Heart left ventricle (tissue), 16 donors: ENCODE measurements at regions of chr2 and their contacts with region 1.

Region 1: GRCh38 chr2:10035053-10035422 is 8.3 kb upstream of the KLF11 start:
- DNase-seq: peak in 2 of 5 donors; percentile 15 to 61
- ATAC-seq: no peak
- H3K4me3 ChIP-seq: no peak overlapping the region
- H3K27ac ChIP-seq: peak overlapping the region in 5 of 12 donors; percentile 82 to 97 (median 90)
- H3K4me1 ChIP-seq: peaks cover 7 to 71% (median 50%) of the 10 kb centered on the region in 12 donors
- H3K27me3 ChIP-seq: no peaks in the 10 kb centered on the region
- CTCF ChIP-seq: no peak
- POLR2A ChIP-seq: no peak

Region 2: DNA sequence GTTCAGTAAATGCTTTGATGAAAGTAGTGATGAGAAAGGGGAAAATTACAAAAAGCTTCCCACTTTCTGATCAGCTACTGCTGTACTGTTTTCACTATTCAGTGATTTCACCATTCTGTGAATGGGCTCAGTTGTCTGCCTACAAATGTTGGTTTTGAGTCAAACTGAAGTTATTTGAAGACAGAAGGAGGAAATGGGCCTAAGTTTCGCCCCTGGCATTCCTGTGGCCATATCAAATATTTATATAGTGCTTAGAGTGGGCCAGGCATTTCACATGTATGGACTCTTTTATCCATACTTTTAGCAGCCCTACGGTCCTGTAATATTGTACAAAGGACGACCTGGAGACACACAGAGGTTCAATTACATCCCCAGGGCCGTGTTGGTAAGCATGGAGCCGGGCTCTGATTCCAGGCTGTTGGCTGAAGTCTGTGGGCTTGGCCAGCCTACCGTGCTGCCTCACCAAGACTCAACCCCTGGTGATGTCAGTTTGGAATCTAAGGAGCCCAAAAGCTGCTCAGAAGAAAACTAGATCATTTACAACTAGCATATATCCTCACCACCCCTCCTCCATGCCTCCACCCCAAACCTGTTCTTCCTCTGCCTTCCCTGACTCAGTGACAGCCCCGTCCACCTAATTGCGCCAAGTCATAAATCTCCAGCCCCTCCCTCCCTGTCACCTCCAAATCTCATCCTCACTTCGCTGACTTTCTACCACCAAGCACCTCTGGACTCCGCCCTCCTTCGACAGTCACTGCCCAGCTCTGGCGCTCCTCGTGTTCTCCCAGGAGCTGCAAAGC is 93.6 kb before region 1 on chr2:
- intact Hi-C with region 1: no loop called
- DNase-seq: no peak
- ATAC-seq: no peak
- H3K4me3 ChIP-seq: no peak overlapping the region
- H3K27ac ChIP-seq: no peak overlapping the region
- H3K4me1 ChIP-seq: no peaks in the 10 kb centered on the region
- H3K27me3 ChIP-seq: peaks cover 0 to 19% (median 3%) of the 10 kb centered on the region in 9 donors
- CTCF ChIP-seq: no peak
- POLR2A ChIP-seq: no peak

Region 3: DNA sequence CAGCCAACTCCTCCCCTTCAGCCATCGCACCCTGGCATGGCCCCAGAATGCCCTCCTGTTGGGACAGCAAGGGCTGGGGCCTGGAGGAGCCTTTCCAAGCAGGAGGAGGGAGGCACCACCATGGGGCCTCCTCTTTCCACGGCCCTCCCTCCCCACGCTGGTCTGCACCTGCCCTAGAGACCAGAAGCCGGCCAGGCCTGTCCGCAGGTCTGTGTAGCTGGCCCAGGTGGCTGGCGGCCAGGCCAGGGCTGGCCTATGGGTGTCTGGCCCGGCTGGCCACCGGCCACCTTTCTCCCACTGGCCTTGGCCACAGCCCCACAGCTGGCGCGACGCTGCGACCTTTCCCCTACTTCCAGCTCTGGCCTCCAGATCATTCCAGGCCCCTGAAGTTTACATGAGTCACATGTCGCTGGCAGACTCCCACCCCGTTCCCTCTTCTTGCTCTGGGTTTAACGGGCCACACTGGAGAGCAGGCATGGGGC is 25.2 kb before region 1 on chr2:
- intact Hi-C with region 1: loop called in 3 of 10 experiments (anchors 2 to 5 kb)
- DNase-seq: peak; percentile 82 to 95 (median 94)
- ATAC-seq: peak; percentile 79 to 85 (median 81)
- H3K4me3 ChIP-seq: no peak overlapping the region
- H3K27ac ChIP-seq: peak overlapping the region; percentile 28 to 90 (median 70)
- H3K4me1 ChIP-seq: peaks cover 6 to 44% (median 34%) of the 10 kb centered on the region in 12 donors
- H3K27me3 ChIP-seq: no peaks in the 10 kb centered on the region
- CTCF ChIP-seq: no peak
- POLR2A ChIP-seq: no peak

Region 4: DNA sequence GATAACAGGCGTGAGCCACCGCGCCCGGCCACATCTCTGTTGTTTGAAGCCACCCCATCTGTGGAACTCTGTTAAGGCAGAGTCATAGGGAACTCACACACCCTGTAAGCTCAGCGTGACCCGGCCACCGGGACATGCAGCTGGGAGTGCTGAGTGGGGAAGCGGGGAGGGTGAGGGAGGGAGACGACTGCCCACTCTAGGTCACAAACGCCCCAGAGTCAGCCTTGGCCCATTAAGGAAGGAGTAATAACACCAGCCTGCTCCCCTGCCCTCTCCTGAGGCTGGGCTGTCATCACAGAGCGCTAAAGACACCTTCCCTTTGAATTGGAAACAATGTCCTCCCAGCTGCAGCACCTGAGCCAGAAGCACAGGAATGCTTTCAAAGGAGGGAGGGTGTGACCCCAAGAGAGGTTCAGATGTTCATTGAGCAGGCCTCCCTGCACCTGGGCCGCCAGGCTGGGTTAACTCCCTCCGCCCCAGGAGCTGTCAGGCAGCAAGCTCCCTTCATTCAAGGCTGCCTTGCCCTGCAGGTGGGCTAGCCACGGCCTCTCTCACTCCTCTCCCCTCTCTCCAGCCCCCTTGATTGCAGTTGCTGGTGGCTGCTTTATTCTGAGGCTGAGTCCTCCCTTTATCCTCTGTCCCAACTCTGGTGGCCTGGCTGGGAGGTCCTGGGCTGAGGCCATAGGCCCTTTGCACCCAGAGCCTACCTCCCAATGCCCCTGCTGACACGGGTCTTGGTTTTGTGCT is 190.4 kb after region 1 on chr2:
- intact Hi-C with region 1: no loop called
- DNase-seq: peak in 1 of 5 donors; percentile 46
- ATAC-seq: no peak
- H3K4me3 ChIP-seq: no peak overlapping the region
- H3K27ac ChIP-seq: no peak overlapping the region
- H3K4me1 ChIP-seq: peaks cover 0 to 13% (median 0%) of the 10 kb centered on the region in 12 donors
- H3K27me3 ChIP-seq: peaks cover 0 to 4% (median 0%) of the 10 kb centered on the region in 9 donors
- CTCF ChIP-seq: no peak
- POLR2A ChIP-seq: no peak